ENCODE measurements at regions of chr2 and their contacts with region 1.

Region 1: GRCh38 chr2:35822716-35823115 is 532.9 kb upstream of the CRIM1 start:
- DNase-seq: no peak
- ATAC-seq: no peak
- H3K4me3 ChIP-seq: no peak overlapping the region
- H3K27ac ChIP-seq: no peak overlapping the region
- H3K4me1 ChIP-seq: no peaks in the 10 kb centered on the region
- H3K27me3 ChIP-seq: no peaks in the 10 kb centered on the region
- CTCF ChIP-seq: no peak

Region 2: DNA sequence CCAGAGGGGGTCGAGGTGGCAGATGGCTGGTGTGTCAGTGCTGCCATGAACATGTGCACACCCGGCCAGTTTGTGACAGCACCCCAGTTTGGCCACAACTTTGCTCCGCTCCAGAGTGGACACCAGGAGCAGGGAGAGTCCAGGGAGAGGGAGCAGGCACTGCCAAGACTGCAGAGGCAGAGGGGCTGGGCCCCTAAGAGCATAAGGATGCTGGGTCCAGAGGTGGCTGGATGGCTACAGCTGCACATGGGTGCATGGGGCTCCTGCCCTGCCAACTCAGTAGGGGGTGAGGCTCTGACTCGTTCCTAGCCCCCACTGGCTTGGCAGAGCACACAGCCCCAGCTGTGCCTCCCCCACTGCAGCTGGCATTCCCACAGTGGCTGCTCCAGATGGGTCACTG is 466.4 kb before region 1 on chr2:
- intact Hi-C with region 1: no loop called
- DNase-seq: no peak
- ATAC-seq: no peak
- H3K4me3 ChIP-seq: no peak overlapping the region
- H3K27ac ChIP-seq: no peak overlapping the region
- H3K4me1 ChIP-seq: no peaks in the 10 kb centered on the region
- H3K27me3 ChIP-seq: peaks cover 0 to 1% (median 0%) of the 10 kb centered on the region in 3 donors
- CTCF ChIP-seq: no peak

Region 3: GRCh38 chr2:35783725-35784124 is 39.0 kb before region 1 on chr2:
- intact Hi-C with region 1: no loop called
- DNase-seq: no peak
- ATAC-seq: no peak
- H3K4me3 ChIP-seq: no peak overlapping the region
- H3K27ac ChIP-seq: no peak overlapping the region
- H3K4me1 ChIP-seq: no peaks in the 10 kb centered on the region
- H3K27me3 ChIP-seq: no peaks in the 10 kb centered on the region
- CTCF ChIP-seq: no peak

Region 4: GRCh38 chr2:35803120-35803519 is 19.6 kb before region 1 on chr2:
- intact Hi-C with region 1: loop called in 1 of 2 experiments (anchors 2 kb)
- DNase-seq: no peak
- ATAC-seq: no peak
- H3K4me3 ChIP-seq: no peak overlapping the region
- H3K27ac ChIP-seq: no peak overlapping the region
- H3K4me1 ChIP-seq: no peaks in the 10 kb centered on the region
- H3K27me3 ChIP-seq: no peaks in the 10 kb centered on the region
- CTCF ChIP-seq: no peak

Region 5: GRCh38 chr2:35933031-35933430 is 110.3 kb after region 1 on chr2:
- intact Hi-C with region 1: no loop called
- DNase-seq: no peak
- ATAC-seq: no peak
- H3K4me3 ChIP-seq: no peak overlapping the region
- H3K27ac ChIP-seq: no peak overlapping the region
- H3K4me1 ChIP-seq: no peaks in the 10 kb centered on the region
- H3K27me3 ChIP-seq: no peaks in the 10 kb centered on the region
- CTCF ChIP-seq: no peak